ENCODE measurements at regions of chr13 and their contacts with region 1.

Region 1: GRCh38 chr13:30319655-30320054 is 12.3 kb upstream of the KATNAL1 start:
- DNase-seq: no peak
- H3K4me3 ChIP-seq: no peak overlapping the region
- H3K27ac ChIP-seq: no peak overlapping the region
- H3K4me1 ChIP-seq: peaks cover 50% of the 10 kb centered on the region
- CTCF ChIP-seq: no peak

Region 2: DNA sequence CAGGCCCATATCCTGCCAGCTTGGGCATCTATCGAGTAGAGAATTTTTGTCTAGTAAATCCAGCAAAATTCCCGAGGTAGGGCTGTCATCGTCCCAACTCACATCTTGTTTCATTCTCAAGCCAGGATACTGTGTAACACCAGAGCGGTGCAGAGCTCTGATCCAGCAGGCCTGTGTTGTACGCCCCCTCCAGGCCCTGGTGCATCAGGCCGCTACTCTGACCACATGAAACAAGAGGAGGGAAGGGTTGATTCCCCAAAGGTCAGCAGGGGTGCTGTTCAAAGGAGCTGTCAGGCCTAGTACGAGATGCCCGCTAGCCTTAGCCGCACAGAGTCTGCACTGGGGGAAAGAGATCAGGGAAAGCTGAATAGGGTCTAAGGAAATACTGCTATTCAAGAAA is 1000.2 kb before region 1 on chr13:
- CTCF ChIA-PET with region 1: no interaction called
- POLR2A ChIA-PET with region 1: no interaction called
- intact Hi-C with region 1: no loop called
- DNase-seq: no peak
- H3K4me3 ChIP-seq: no peak overlapping the region
- H3K27ac ChIP-seq: no peak overlapping the region
- H3K4me1 ChIP-seq: no peaks in the 10 kb centered on the region
- CTCF ChIP-seq: no peak

Region 3: GRCh38 chr13:30334663-30335386 is 15.2 kb after region 1 on chr13:
- CTCF ChIA-PET with region 1: no interaction called
- POLR2A ChIA-PET with region 1: interaction called, 10 read pairs
- intact Hi-C with region 1: no loop called
- DNase-seq: peak; percentile 60
- H3K4me3 ChIP-seq: peak overlapping the region; percentile 58
- H3K27ac ChIP-seq: peak overlapping the region; percentile 98
- H3K4me1 ChIP-seq: peaks cover 80% of the 10 kb centered on the region
- CTCF ChIP-seq: peak; percentile 85

Region 4: DNA sequence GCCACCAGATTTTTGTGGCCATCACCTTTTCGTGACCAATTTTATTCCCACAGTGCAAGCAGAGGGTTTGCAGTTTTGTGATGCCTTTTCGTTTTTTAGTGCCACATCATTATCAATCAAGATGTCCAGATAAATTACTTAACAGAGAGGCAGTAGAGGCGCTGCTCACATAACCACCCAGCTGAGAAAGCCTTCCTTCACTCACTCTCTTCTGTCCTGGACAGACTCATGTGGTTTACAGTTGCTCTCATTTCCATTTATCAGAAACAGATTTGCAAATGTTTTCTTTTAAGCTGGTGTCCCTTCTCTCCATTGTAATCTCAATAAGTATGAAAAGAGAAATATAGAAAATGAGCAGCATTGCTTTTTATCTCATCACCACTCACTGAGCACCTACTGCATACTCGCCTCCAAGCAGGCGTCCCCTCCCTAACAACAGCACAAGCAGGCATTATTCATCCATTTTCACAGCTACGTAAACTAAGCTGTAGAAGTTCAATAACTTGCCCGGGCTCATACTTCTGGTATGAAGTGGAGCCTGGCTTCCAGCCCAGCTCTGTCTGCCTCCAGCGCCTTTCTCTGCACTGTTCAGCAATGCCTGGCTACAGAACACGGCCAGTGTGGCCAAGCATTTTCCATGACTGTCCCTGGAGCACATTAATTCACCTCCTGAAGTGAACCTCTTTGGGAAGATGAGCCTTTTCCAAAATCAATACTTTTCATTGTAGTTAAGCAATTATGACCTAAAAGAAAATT is 22.3 kb after region 1 on chr13:
- CTCF ChIA-PET with region 1: no interaction called
- POLR2A ChIA-PET with region 1: no interaction called
- intact Hi-C with region 1: loop called (anchors 1 kb)
- DNase-seq: no peak
- H3K4me3 ChIP-seq: no peak overlapping the region
- H3K27ac ChIP-seq: no peak overlapping the region
- H3K4me1 ChIP-seq: peaks cover 10% of the 10 kb centered on the region
- CTCF ChIP-seq: no peak